Spleen (tissue), 13 donors: ENCODE measurements at regions of chr14 and their contacts with region 1.

Region 1: DNA sequence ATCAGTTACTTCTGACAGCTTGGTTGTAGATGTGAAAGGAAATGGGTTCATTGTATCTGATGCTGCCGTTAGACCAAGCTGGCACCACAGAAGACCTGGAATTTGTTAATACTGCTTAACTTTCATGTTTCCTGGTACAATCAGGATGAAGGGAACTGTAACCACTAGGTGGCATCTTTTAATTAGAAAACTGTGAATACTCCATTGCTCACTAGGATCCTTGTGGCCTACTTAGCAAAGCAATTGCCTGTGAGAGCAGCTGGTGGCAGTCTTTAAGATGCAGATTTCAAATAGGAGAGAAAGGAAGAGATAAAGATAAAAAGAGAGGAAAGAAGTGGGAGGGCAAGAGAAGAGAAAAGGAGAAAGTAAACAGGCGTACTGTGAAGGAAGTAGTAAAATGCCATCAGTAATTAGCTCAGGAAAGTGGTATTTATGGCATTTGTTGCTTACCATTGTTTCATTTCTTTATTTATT is 114.5 kb downstream of the RAD51B start:
- DNase-seq: no peak
- H3K4me3 ChIP-seq: no peak overlapping the region
- H3K27ac ChIP-seq: peak overlapping the region in 5 of 8 donors; percentile 6 to 36 (median 13)
- H3K4me1 ChIP-seq: peaks cover 0 to 20% (median 0%) of the 10 kb centered on the region in 6 donors
- H3K27me3 ChIP-seq: no peaks in the 10 kb centered on the region
- CTCF ChIP-seq: peak; percentile 24 to 81 (median 67)
- POLR2A ChIP-seq: no peak

Region 2: DNA sequence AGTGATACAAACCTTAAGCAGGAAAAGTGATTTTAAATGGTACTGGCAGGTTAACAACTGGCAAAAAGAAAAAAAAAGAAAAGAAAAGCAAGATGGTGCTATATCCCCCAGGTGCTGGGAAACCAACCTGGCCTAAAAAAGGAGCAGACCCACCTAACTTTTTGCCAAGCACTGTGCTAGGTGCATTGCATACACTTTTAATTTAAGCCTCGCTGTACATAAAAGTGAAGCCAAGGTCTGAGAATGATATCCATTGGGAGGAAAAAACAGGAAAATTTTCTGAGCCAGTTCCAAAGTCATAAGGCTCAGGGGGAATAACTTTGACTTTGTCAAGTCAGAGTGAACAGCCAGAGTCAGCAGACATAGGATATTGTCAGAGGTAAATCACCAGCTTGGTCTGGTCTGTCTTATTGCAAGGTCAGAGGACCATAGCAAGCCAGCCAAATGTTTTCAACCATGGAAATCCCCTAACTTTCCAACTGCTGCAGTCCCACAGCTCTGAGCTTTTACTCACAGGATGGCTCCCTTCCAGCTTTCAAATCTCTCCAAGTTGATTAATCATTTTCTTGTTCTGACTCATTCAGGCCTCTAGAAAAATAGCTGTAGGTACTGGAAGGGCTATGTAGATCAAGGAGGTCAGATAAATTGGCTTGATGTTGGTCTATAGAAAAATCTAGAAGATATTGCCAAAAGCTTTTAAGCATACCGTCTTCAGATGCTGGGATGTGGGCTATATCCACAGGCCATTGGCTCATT is 298.4 kb after region 1 on chr14:
- intact Hi-C with region 1: loop called (anchors 10 kb)
- DNase-seq: no peak
- H3K4me3 ChIP-seq: no peak overlapping the region
- H3K27ac ChIP-seq: peak overlapping the region in 7 of 8 donors; percentile 33 to 75 (median 56)
- H3K4me1 ChIP-seq: peaks cover 0 to 22% (median 16%) of the 10 kb centered on the region in 6 donors
- H3K27me3 ChIP-seq: no peaks in the 10 kb centered on the region
- CTCF ChIP-seq: no peak
- POLR2A ChIP-seq: no peak

Region 3: DNA sequence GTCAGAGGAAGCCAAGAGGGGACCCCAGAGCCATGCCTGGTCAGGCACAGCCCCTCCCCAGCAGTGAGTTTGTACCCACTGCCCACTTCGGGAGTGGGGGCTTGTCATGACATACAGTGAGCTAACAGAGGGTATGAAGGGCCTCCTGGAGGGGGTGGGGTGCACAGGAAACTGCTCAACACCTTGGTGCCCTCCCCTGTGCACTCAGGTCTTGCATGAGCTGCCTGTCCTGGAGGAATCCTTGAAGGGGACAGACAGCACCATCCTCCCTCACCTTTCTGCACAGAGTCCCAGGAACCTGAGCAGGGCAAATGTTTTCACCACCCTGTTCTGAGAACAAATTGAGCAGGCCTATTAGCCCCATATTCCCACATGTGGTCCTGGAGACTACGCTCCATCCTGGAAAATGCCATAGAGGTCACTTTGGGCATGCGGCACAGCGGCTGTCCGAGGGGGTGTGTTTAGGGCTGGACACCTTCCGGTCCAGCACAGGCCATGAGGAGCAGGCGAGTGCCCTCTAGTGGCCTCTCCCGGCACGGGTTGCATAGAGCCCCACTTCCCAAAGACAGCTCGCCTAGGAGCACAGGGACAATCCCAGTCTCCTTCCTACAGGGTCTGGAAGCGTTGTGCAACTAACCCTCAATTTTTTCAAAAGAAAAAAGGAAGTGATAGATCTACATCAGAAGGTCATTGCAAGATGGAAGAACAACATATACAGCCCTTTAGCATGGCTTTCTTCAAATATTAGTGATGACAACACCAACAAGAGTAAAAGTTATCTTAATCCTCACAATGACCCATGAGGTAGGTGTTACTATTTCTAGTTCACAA is 890.7 kb after region 1 on chr14:
- intact Hi-C with region 1: loop called (anchors 5 kb)
- DNase-seq: peak; percentile 90
- H3K4me3 ChIP-seq: no peak overlapping the region
- H3K27ac ChIP-seq: no peak overlapping the region
- H3K4me1 ChIP-seq: peaks cover 0 to 46% (median 34%) of the 10 kb centered on the region in 6 donors
- H3K27me3 ChIP-seq: no peaks in the 10 kb centered on the region
- CTCF ChIP-seq: peak in 10 of 11 experiments; percentile 40 to 88 (median 80)
- POLR2A ChIP-seq: no peak